ENCODE measurements at regions of chr5 and their contacts with region 1.

Region 1: DNA sequence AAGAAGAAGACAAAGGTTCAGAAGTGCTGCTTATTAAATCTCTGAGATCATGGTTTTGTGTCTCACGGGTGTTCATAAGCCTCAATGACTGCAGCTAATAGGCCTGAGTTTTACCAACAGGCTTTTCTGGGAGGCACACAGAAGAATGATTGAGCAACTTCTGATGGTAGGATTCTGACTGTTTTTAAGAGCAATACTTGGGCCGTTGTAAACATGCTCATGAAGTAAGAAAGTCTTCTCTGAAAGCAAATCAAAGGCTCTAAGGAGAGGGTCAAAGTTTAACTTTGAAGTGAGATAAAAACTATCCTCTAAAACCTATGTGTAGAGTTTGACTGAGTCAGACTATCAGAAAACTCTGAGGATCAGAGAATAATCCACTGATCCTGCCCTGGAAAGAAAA is 390.9 kb upstream of the DAB2 start:
- DNase-seq: no peak
- H3K4me3 ChIP-seq: no peak overlapping the region
- H3K27ac ChIP-seq: no peak overlapping the region
- H3K4me1 ChIP-seq: no peaks in the 10 kb centered on the region
- H3K27me3 ChIP-seq: no peaks in the 10 kb centered on the region
- CTCF ChIP-seq: no peak

Region 2: GRCh38 chr5:39555788-39556187 is 259.9 kb before region 1 on chr5:
- CTCF ChIA-PET with region 1: no interaction called
- POLR2A ChIA-PET with region 1: no interaction called
- intact Hi-C with region 1: no loop called
- DNase-seq: no peak
- H3K4me3 ChIP-seq: no peak overlapping the region
- H3K27ac ChIP-seq: no peak overlapping the region
- H3K4me1 ChIP-seq: no peaks in the 10 kb centered on the region
- H3K27me3 ChIP-seq: no peaks in the 10 kb centered on the region
- CTCF ChIP-seq: no peak

Region 3: DNA sequence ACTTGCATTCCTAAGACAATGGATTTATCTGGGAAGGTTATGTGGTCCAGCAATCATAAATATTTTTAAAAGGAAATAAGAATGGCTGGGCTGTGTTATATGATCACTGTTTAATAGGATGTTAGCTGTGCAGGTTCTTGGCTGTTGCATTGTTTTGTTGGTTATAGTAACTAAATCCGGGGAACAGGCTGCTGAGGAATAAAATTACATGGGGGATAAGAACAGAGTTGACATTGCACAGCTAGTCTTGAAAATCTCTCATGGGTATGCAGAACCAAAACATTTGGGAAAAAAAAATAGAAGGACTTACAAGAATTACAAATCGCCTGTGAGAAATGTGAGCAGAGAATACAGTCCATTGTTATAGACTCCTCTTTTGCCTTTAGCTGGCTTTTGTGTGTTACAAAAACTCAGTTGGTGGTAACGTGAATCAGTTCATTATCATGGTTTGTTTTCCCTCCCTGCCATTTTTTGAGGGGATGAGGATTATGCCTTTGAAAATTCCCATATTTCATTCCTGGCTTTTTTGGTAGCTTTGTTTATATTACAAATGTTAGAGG is 15.6 kb before region 1 on chr5:
- CTCF ChIA-PET with region 1: no interaction called
- POLR2A ChIA-PET with region 1: no interaction called
- intact Hi-C with region 1: loop called (anchors 2 kb)
- DNase-seq: no peak
- H3K4me3 ChIP-seq: no peak overlapping the region
- H3K27ac ChIP-seq: no peak overlapping the region
- H3K4me1 ChIP-seq: no peaks in the 10 kb centered on the region
- H3K27me3 ChIP-seq: no peaks in the 10 kb centered on the region
- CTCF ChIP-seq: no peak

Region 4: DNA sequence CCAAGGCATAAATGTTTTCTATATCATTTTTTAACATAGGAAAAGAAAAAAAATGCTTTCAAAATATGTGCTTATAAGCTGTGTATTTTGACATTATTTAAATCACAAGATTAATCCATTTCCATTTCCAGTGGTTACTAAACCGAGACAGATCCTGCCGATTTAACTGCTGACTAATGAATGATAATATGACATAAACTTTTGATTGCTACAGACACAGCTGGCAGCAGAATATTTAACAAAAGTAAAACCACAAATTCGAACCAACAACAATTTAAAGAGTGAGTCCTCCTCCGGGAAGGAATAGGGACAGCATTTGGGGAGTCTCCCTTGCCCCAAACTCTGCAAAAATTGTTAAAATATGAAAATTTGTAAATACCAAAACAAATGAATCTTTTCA is 10.3 kb after region 1 on chr5:
- CTCF ChIA-PET with region 1: no interaction called
- POLR2A ChIA-PET with region 1: no interaction called
- intact Hi-C with region 1: loop called (anchors 2 kb)
- DNase-seq: no peak
- H3K4me3 ChIP-seq: no peak overlapping the region
- H3K27ac ChIP-seq: no peak overlapping the region
- H3K4me1 ChIP-seq: no peaks in the 10 kb centered on the region
- H3K27me3 ChIP-seq: no peaks in the 10 kb centered on the region
- CTCF ChIP-seq: no peak

Region 5: DNA sequence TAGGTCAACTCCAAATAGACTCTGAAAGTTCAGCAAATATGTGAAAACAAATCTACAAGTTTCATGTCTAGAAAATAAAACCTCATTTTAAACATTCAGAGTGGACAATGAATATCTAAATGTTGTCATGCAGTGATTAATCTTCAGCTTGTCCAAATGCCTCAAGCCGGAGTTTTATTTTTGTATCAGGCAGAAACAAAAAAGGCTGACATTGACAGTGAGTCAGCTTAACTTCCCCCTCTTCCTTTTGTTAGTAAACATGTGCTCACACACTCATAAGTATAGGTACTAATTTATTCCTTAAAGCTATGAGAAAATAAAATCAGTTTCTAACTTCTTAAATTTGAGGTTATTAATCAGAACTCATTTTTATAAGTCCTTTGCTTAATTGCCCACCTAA is 77.0 kb after region 1 on chr5:
- CTCF ChIA-PET with region 1: no interaction called
- POLR2A ChIA-PET with region 1: no interaction called
- intact Hi-C with region 1: loop called (anchors 5 kb)
- DNase-seq: no peak
- H3K4me3 ChIP-seq: no peak overlapping the region
- H3K27ac ChIP-seq: no peak overlapping the region
- H3K4me1 ChIP-seq: no peaks in the 10 kb centered on the region
- H3K27me3 ChIP-seq: no peaks in the 10 kb centered on the region
- CTCF ChIP-seq: no peak

Measured in PC-9 (cell line).